ENCODE measurements at regions of chr1 and their contacts with region 1.

Region 1: DNA sequence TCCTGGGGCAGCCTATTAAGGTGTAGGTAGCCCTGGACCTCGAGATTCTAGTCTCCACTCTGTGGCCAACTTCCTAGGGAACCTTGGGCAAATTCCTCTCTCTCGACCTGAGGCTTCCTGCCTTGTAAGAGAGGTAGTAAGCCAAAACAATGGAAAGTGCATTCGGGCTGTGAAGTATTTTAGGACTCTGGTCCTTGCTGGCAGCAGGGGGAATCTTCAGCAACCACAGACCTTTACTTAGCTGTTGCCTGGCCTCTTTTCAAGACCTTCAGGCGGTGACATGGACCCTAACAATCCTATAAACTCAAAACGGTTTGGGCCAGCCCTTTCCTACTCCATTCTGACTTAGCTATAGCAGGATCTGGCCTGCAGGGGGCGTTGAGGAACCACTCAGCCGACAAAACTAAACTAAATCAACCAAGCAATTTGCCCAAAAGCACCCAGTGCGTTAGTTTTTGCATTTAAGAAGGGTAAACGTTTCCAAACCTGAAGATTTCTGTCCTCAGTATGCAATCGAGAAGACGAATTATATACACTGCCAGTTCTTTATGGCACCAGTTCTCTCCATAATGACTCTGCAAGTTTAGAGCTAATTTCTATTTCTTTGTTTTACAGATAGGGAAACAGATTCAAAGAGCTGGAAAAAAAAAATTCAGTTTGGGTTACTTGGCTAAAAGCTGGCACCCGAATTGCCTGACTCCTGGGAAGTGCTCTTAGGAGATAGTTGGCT is 10.9 kb upstream of the SESN2 start:
- DNase-seq: peak; percentile 93
- H3K4me3 Mint-ChIP-seq: peak overlapping the region; percentile 56
- H3K27ac Mint-ChIP-seq: peak overlapping the region; percentile 97
- H3K4me1 Mint-ChIP-seq: peaks cover 52% of the 10 kb centered on the region
- H3K27me3 Mint-ChIP-seq: no peaks in the 10 kb centered on the region

Region 2: DNA sequence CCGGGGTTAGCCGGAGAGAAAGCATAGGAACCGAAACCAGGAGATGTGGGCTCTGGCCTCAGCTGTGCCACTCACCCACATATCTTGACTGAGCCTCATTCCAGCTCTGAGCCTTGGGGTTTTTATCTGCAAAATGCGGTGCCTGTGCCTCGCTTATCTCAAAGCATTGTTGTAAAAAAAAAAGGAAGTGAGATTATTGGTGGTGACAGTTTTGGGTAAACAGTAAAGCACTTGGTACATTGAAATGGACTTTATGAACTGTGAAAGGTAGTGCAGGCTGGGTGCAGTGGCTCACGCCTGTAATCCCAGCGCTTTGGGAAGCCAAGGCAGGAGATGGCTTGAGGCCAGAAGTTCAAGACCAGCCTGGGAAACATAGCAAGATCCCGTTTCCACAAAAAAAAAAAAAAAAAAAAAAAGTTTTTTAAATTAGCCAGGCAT is 75.7 kb before region 1 on chr1:
- CTCF ChIA-PET with region 1: no interaction called
- intact Hi-C with region 1: loop called (anchors 2 kb)
- DNase-seq: peak; percentile 38
- H3K4me3 Mint-ChIP-seq: no peak overlapping the region
- H3K27ac Mint-ChIP-seq: no peak overlapping the region
- H3K4me1 Mint-ChIP-seq: peaks cover 41% of the 10 kb centered on the region
- H3K27me3 Mint-ChIP-seq: peaks cover 28% of the 10 kb centered on the region

Region 3: DNA sequence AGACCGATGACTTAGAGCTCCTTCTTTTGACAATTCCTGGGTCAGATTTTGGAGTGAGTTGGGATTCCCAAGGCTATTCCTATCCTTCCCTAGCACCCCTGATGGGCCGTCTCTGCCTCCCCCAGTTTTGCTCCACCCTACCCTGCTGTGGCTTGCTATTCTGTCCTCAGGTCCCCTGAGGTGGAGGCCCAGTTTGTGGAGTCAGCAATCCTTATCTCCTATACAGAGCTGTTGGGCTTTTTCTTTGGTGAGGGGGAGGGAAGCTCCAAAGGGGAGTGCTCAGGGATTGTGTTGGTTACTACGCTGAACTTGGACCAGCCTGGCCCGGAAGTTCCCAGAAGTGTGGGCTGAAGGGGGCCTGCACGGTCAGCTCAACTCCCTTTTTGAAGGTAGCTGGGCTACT is 18.5 kb after region 1 on chr1:
- CTCF ChIA-PET with region 1: interaction called, 21 read pairs
- intact Hi-C with region 1: no loop called
- DNase-seq: no peak
- H3K4me3 Mint-ChIP-seq: no peak overlapping the region
- H3K27ac Mint-ChIP-seq: no peak overlapping the region
- H3K4me1 Mint-ChIP-seq: peaks cover 16% of the 10 kb centered on the region
- H3K27me3 Mint-ChIP-seq: no peaks in the 10 kb centered on the region

Region 4: GRCh38 chr1:28369371-28370238 is 121.2 kb after region 1 on chr1 and contains the start of gene PHACTR4:
- CTCF ChIA-PET with region 1: interaction called, 12 read pairs
- intact Hi-C with region 1: loop called (anchors 1 kb)
- DNase-seq: peak; percentile 86
- H3K4me3 Mint-ChIP-seq: peak within 1 kb of the TSS; percentile 85
- H3K27ac Mint-ChIP-seq: peak within 1 kb of the TSS; percentile 92
- H3K4me1 Mint-ChIP-seq: peaks cover 25% of the 10 kb centered on the region
- H3K27me3 Mint-ChIP-seq: no peaks in the 10 kb centered on the region
- total RNA-seq, gene PHACTR4: 16.3 to 17.2 TPM

Region 5: GRCh38 chr1:28552758-28553663 is 304.6 kb after region 1 on chr1 and contains the start of gene TRNAU1AP:
- CTCF ChIA-PET with region 1: no interaction called
- intact Hi-C with region 1: loop called (anchors 1 kb)
- DNase-seq: peak; percentile 99
- H3K4me3 Mint-ChIP-seq: peak within 1 kb of the TSS; percentile 94
- H3K27ac Mint-ChIP-seq: peak within 1 kb of the TSS; percentile 97
- H3K4me1 Mint-ChIP-seq: peaks cover 19% of the 10 kb centered on the region
- H3K27me3 Mint-ChIP-seq: no peaks in the 10 kb centered on the region
- total RNA-seq, gene TRNAU1AP: 36.7 to 39.4 TPM

Region 6: DNA sequence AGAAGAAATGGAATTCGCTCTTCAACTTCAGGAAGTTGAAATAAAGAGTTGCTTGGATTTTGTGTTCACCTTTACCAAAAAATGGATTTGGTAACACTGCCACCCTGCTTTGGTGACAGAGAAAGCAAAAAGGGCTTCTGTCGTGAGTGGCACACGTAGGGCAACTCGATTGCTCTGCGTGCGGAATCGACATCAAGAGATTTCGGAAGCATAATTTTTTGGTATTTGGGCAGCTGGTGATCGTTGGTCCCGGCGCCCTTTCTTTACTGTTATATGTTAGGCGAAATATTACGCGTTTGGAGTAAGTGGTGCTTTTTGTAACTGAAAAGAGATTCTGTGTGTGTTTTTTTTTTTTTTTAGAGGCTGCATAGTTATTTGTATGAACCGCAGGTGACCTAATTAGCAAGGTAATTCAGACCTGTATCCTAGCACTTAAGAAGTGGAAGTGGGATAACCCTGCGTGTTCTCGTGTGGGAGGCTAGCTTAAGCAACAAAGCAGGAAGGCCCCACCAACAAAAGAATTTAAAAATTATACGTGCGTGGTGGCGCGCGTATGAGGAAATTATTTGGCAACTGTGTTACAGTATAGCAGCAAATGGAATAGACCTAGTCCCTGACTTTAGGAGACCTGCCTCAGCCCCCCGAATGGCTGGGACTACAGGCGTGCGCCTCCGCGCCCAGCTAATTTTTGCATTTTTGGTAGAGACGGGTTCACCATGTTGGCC is 400.2 kb after region 1 on chr1 and contains the start of gene RNU11:
- CTCF ChIA-PET with region 1: no interaction called
- intact Hi-C with region 1: loop called (anchors 2 kb)
- DNase-seq: peak; percentile 92
- H3K4me3 Mint-ChIP-seq: peak within 1 kb of the TSS; percentile 92
- H3K27ac Mint-ChIP-seq: peak within 1 kb of the TSS; percentile 99
- H3K4me1 Mint-ChIP-seq: peaks cover 28% of the 10 kb centered on the region
- H3K27me3 Mint-ChIP-seq: no peaks in the 10 kb centered on the region
- total RNA-seq, gene RNU11: not detected

Region 7: DNA sequence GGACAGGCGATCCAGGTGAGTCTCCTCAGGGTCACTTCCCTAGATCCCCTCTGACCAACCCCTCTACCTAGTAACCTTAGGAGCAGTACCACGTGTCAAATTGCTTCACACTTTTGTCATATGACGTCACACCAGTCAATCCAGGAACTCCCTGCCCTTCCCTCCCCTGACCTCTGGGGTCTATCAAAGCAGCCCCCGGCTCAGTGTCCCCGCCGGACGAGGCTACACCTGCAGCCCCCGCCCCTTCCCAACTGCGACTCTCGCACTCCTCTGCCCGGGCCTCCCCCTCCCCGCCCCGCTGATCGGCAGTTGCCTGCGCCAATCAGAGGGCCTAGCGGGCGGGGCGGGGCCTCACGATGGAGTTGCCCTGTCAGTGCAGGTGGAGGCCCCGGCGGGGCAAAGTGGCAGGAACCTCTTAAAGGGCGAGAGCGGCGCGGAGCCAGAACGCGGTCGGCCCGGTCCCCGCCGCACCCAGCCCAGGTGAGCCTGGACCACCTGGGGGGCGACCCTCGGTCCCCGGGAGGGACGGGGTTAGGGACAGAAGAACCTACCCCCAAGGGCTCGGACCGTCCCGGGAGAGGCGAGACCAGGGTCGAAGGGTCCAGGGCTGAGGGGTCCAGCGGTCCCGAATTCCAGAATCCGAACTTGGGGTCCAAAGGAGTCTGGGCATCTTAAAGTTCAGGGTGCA is 638.4 kb after region 1 on chr1:
- CTCF ChIA-PET with region 1: no interaction called
- intact Hi-C with region 1: loop called (anchors 5 kb)
- DNase-seq: peak; percentile 92
- H3K4me3 Mint-ChIP-seq: peak overlapping the region; percentile 81
- H3K27ac Mint-ChIP-seq: peak overlapping the region; percentile 92
- H3K4me1 Mint-ChIP-seq: peaks cover 48% of the 10 kb centered on the region
- H3K27me3 Mint-ChIP-seq: no peaks in the 10 kb centered on the region